ENCODE measurements at regions of chr9 and their contacts with region 1.

Region 1: GRCh38 chr9:127869310-127870152 is 7.9 kb downstream of the AK1 start:
- DNase-seq: peak; percentile 87
- H3K4me3 ChIP-seq: no peak overlapping the region
- H3K27ac ChIP-seq: no peak overlapping the region
- H3K4me1 ChIP-seq: peaks cover 9% of the 10 kb centered on the region
- CTCF ChIP-seq: peak; percentile 93

Region 2: DNA sequence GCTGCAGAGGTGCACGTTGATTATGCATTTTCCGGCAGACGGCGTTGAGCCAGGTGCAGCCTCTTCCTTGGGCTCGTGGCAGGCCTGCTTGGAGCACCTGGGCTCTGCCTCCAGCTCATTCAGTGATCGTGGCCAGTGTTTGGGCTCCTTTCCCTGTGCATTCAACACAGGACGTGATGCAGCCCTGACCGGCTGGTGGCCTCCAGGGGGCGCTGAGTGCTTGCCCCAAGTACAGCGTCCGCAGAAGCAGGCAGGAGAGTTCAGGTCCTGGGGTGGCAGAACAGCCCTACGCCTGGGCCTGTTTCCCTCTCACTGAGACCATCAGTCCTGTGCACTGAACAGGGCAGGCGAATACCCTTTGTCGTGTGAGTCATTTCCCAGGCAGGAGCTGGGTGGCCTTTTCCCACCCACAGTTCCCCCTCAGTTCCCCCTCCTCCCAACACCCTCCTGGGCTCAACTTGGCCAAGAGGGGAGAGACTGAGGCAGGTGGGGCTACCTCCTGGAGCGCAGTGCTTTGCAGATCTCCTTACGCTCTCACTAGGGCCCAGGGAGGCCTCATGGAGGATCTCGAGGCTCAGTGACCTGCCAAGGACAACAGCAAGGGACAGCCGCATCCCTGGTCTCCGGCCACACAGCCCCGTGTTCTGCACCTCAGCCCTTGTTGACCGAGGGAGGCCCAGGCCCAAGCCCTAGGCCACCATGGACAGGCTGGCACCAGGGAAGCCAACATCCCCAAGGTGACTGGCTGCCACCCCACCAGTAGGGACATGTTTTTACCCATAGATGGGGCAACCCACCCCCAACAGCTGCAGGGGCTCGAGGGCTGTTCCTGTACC is 365.4 kb before region 1 on chr9:
- CTCF ChIA-PET with region 1: no interaction called
- POLR2A ChIA-PET with region 1: no interaction called
- intact Hi-C with region 1: loop called (anchors 10 kb)
- DNase-seq: peak; percentile 78
- H3K4me3 ChIP-seq: no peak overlapping the region
- H3K27ac ChIP-seq: no peak overlapping the region
- H3K4me1 ChIP-seq: no peaks in the 10 kb centered on the region
- CTCF ChIP-seq: peak; percentile 85

Region 3: DNA sequence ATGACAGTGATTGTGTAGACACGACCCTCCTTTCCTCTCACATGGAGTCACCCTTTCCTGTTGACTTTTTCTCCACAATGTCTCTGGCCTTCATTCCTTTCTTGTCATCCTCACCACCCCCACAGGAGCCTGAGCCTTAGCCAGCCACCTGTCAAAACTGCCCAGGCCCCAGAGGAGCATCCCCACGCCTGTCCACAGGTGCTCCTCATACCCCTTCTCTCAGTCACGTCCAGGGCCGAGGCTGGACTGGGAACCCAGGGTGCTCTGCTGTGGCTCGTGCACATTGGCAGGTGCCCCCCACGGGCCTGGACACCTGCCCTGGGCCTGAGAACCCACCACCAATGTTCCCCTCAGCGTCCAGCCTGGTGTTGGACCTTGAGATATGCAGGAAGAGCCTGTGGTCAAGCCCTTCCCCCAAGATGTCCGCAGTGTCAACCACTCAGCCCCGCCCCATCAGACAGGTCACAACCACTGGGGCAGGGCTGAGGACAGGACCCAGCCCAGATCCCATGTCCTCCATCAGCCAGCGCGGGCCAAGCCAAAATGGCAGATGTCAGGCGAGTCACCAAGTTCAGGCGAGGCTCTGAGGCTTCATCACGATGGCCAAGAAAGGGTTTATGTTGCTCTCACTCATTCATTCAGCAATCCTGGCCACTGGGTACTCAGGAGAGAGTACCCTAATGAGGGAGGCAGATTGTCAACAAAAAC is 323.3 kb before region 1 on chr9:
- CTCF ChIA-PET with region 1: no interaction called
- POLR2A ChIA-PET with region 1: no interaction called
- intact Hi-C with region 1: no loop called
- DNase-seq: no peak
- H3K4me3 ChIP-seq: no peak overlapping the region
- H3K27ac ChIP-seq: no peak overlapping the region
- H3K4me1 ChIP-seq: no peaks in the 10 kb centered on the region
- CTCF ChIP-seq: no peak

Region 4: GRCh38 chr9:127586537-127586936 is 283.0 kb before region 1 on chr9:
- CTCF ChIA-PET with region 1: no interaction called
- POLR2A ChIA-PET with region 1: no interaction called
- intact Hi-C with region 1: loop called (anchors 2 kb)
- DNase-seq: peak; percentile 71
- H3K4me3 ChIP-seq: no peak overlapping the region
- H3K27ac ChIP-seq: no peak overlapping the region
- H3K4me1 ChIP-seq: no peaks in the 10 kb centered on the region
- CTCF ChIP-seq: peak; percentile 80

Region 5: GRCh38 chr9:127734747-127735529 is 134.6 kb before region 1 on chr9 and contains the start of gene TOR2A:
- CTCF ChIA-PET with region 1: no interaction called
- POLR2A ChIA-PET with region 1: no interaction called
- intact Hi-C with region 1: loop called (anchors 1 kb)
- DNase-seq: peak; percentile 97
- H3K4me3 ChIP-seq: peak within 1 kb of the TSS; percentile 75
- H3K27ac ChIP-seq: peak within 1 kb of the TSS; percentile 69
- H3K4me1 ChIP-seq: peaks cover 19% of the 10 kb centered on the region
- CTCF ChIP-seq: peak; percentile 93
- total RNA-seq, gene TOR2A: 8.9 and 13.9 TPM in 2 replicates

Region 6: GRCh38 chr9:127785023-127785932 is 84.3 kb before region 1 on chr9:
- CTCF ChIA-PET with region 1: no interaction called
- POLR2A ChIA-PET with region 1: interaction called, 4 read pairs
- intact Hi-C with region 1: loop called (anchors 1 kb)
- DNase-seq: peak; percentile 89
- H3K4me3 ChIP-seq: peak overlapping the region; percentile 88
- H3K27ac ChIP-seq: peak overlapping the region; percentile 89
- H3K4me1 ChIP-seq: peaks cover 56% of the 10 kb centered on the region
- CTCF ChIP-seq: peak; percentile 89

Region 7: DNA sequence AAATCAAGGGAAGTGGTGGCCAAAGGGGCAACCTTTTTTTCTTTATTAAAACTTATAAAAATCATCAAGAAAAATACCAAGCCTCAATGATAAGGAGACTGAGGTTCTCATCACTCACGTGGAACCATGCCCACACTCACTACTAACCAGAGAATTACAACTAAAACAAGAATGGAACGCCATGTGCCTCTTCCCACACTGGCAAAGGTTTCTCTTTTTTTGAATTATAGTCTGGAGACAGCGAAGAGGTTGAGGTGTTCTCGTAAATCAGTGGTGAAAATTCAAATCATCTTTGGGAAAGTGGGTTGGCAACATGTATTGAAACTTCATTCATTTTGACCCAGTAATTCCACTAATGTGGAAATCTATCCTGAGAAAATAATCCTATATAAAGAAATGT is 47.4 kb before region 1 on chr9:
- CTCF ChIA-PET with region 1: interaction called, 3 read pairs
- POLR2A ChIA-PET with region 1: no interaction called
- intact Hi-C with region 1: loop called (anchors 5 kb)
- DNase-seq: no peak
- H3K4me3 ChIP-seq: no peak overlapping the region
- H3K27ac ChIP-seq: no peak overlapping the region
- H3K4me1 ChIP-seq: no peaks in the 10 kb centered on the region
- CTCF ChIP-seq: no peak

Measured in OCI-LY7 (cell line).